CD4-positive, alpha-beta T cell (primary cell): ENCODE measurements at regions of chr1 and their contacts with region 1.

Region 1: GRCh38 chr1:154324669-154325582 is at the start of gene ATP8B2:
- DNase-seq: peak; percentile 68 to 90 (median 74)
- ATAC-seq: peak; percentile 57
- H3K4me3 ChIP-seq: peak within 1 kb of the TSS; percentile 70
- H3K4me3 Mint-ChIP-seq: peak within 1 kb of the TSS; percentile 94
- H3K27ac ChIP-seq: peak within 1 kb of the TSS; percentile 80 to 86
- H3K27ac Mint-ChIP-seq: peak within 1 kb of the TSS; percentile 90
- H3K4me1 ChIP-seq: peaks cover 52% of the 10 kb centered on the region
- H3K4me1 Mint-ChIP-seq: peaks cover 36% of the 10 kb centered on the region
- H3K27me3 ChIP-seq: no peaks in the 10 kb centered on the region
- H3K27me3 Mint-ChIP-seq: no peaks in the 10 kb centered on the region
- CTCF ChIP-seq: peak; percentile 95
- total RNA-seq, gene ATP8B2: 72.7 to 80.7 TPM

Region 2: GRCh38 chr1:154198756-154199562 is 126.0 kb before region 1 on chr1:
- CTCF ChIA-PET with region 1: no interaction called
- POLR2A ChIA-PET with region 1: no interaction called
- intact Hi-C with region 1: loop called in 1 of 2 experiments (anchors 5 kb)
- DNase-seq: peak in 11 of 14 experiments; percentile 5 to 81 (median 30)
- ATAC-seq: peak; percentile 90
- H3K4me3 ChIP-seq: no peak overlapping the region
- H3K4me3 Mint-ChIP-seq: no peak overlapping the region
- H3K27ac ChIP-seq: no peak overlapping the region
- H3K27ac Mint-ChIP-seq: no peak overlapping the region
- H3K4me1 ChIP-seq: peaks cover 3% of the 10 kb centered on the region
- H3K4me1 Mint-ChIP-seq: no peaks in the 10 kb centered on the region
- H3K27me3 ChIP-seq: no peaks in the 10 kb centered on the region
- H3K27me3 Mint-ChIP-seq: peaks cover 3% of the 10 kb centered on the region
- CTCF ChIP-seq: peak; percentile 71

Region 3: DNA sequence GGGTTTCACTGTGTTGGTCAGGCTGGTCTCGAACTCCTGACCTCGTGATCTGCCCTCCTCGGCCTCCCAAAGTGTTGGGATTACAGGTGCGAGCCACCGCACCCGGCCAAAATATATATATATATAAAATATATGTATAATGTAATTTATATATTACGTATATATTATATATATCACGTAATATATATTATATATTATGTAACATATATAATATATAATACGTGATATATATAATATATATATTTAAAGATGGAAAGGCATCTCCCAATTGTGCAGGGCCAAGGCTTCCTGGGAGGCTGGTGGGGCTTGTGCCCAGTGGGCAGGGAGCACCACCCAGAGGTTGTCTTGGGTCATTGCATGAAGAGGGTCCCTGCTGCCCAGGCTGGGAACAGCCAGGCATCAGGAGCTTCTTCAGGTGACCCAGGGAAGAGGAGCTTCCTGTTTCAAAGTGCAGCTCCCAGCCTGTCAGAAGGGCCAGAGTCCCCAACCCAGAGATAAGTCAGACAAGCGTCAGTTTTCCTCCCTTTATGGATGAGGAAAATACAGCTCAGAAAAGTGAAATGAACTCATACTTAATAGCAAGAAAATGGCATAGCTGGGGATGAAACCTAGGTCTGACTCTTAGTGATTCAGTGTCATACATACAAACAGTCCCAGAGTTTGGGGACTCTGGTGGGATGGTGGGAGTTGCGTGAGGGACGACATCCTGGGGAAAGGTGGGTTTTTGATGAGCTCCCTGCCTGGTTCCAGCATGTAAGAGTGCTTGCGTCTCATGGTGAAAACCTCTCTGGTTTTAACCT is 221.5 kb after region 1 on chr1:
- CTCF ChIA-PET with region 1: no interaction called
- POLR2A ChIA-PET with region 1: no interaction called
- intact Hi-C with region 1: loop called in 1 of 2 experiments (anchors 10 kb)
- DNase-seq: peak; percentile 28 to 77 (median 38)
- ATAC-seq: peak; percentile 93
- H3K4me3 ChIP-seq: no peak overlapping the region
- H3K4me3 Mint-ChIP-seq: no peak overlapping the region
- H3K27ac ChIP-seq: no peak overlapping the region
- H3K27ac Mint-ChIP-seq: no peak overlapping the region
- H3K4me1 ChIP-seq: no peaks in the 10 kb centered on the region
- H3K4me1 Mint-ChIP-seq: peaks cover 4% of the 10 kb centered on the region
- H3K27me3 ChIP-seq: no peaks in the 10 kb centered on the region
- H3K27me3 Mint-ChIP-seq: no peaks in the 10 kb centered on the region
- CTCF ChIP-seq: peak; percentile 68